ENCODE measurements at regions of chr9 and their contacts with region 1.

Region 1: DNA sequence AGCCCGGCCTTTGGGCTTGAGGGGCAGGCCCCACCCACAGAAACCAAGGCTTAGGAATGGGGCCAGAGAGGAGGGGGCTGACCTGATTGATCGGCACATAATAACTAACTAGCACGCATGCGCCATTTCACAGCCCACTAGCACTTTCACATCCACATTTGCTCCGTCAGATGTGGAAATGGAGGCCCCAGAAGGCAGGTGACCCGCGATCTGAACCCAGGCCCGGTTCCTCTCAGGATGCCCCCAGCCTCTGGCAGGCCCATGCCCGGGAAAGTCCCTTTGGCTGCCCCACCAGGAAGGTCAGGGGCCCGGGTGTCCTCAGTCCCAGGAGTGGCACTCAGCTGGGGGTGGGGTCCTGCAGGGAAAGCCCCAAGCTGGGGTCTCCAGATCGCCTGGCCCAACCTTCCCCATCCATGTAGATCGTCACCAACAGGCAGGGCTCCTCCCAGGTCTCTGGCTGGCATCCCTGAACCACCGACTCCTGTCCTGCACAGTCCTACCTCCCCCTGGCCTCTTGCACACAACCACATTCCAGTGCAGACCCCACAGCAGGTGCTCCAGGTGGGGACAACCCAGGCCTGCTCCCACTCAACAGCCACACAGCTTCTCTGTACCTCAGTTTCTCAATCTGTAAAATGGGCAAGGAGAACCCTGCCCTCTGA is 46.7 kb downstream of the VAV2 start:
- DNase-seq: no peak
- H3K4me3 Mint-ChIP-seq: no peak overlapping the region
- H3K27ac Mint-ChIP-seq: peak overlapping the region; percentile 83
- H3K4me1 Mint-ChIP-seq: peaks cover 6% of the 10 kb centered on the region
- H3K27me3 Mint-ChIP-seq: no peaks in the 10 kb centered on the region
- CTCF ChIP-seq: no peak

Region 2: GRCh38 chr9:133774799-133775198 is 170.6 kb before region 1 on chr9:
- CTCF ChIA-PET with region 1: no interaction called
- POLR2A ChIA-PET with region 1: no interaction called
- intact Hi-C with region 1: no loop called
- DNase-seq: no peak
- H3K4me3 Mint-ChIP-seq: no peak overlapping the region
- H3K27ac Mint-ChIP-seq: no peak overlapping the region
- H3K4me1 Mint-ChIP-seq: no peaks in the 10 kb centered on the region
- H3K27me3 Mint-ChIP-seq: no peaks in the 10 kb centered on the region
- CTCF ChIP-seq: no peak

Region 3: GRCh38 chr9:133874056-133874642 is 71.3 kb before region 1 on chr9:
- CTCF ChIA-PET with region 1: interaction called, 3 read pairs
- POLR2A ChIA-PET with region 1: interaction called, 12 read pairs
- intact Hi-C with region 1: loop called (anchors 2 kb)
- DNase-seq: peak; percentile 92
- H3K4me3 Mint-ChIP-seq: peak overlapping the region; percentile 45
- H3K27ac Mint-ChIP-seq: peak overlapping the region; percentile 87
- H3K4me1 Mint-ChIP-seq: peaks cover 39% of the 10 kb centered on the region
- H3K27me3 Mint-ChIP-seq: no peaks in the 10 kb centered on the region
- CTCF ChIP-seq: no peak

Region 4: DNA sequence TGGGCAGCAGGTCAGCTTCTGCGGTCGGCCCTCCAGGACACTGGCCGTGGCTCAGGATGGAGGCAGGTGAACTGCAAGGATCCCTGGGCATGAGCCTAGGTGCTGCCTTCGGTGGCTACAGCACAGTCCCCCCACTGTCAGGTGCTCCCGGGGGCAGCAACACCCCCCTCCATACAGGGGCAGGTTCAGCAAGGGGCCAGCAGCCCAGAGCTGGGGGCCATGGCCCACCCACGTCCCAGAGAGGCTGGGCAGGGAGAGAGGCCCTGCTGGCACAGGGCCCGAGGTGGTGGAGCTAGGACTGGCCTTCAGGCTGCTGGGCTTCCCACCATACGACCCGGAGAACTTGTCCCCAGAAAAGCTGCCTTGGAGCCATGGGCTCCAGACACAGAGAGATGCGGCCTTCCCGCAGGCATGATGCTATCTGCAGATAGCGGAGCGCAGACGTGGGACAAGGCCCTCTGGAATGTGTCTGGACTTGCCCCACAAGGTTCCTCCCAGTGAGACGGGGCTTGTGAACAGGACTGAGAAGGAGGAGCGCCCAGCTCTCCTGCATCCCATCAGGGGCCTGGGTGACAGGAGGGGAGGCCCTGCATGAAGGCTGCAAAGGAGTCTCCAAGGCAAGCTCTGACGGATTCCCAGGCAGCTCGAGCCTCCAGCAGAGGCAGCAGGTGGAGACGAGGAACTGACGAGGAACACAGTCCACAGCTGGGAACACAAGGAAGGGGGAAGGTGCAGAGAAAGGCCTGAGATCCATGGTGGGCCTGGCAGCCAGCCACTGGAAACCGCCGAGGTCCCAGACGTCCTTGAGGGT is 64.4 kb before region 1 on chr9:
- CTCF ChIA-PET with region 1: no interaction called
- POLR2A ChIA-PET with region 1: interaction called, 11 read pairs
- intact Hi-C with region 1: no loop called
- DNase-seq: peak; percentile 71
- H3K4me3 Mint-ChIP-seq: peak overlapping the region; percentile 56
- H3K27ac Mint-ChIP-seq: peak overlapping the region; percentile 99
- H3K4me1 Mint-ChIP-seq: peaks cover 49% of the 10 kb centered on the region
- H3K27me3 Mint-ChIP-seq: no peaks in the 10 kb centered on the region
- CTCF ChIP-seq: no peak

Region 5: DNA sequence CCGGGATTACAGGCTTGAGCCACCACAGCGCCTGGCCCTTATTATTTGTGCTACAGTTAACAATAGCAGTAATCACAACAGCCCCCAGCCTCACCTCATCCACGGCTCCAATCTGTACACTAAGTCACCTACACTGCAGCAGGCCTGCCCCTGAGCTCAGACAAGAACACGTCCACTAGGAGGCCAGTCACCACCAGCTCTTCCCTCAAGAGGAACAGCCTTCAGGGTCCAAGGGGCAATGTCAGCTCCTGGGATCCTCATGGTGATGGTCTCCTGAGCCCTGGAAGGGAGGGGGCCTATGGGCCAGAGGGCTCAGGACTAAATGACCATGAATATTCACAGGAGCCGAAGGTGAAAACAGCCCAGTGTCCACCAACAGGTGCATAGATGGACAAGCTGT is 21.0 kb before region 1 on chr9:
- CTCF ChIA-PET with region 1: no interaction called
- POLR2A ChIA-PET with region 1: no interaction called
- intact Hi-C with region 1: no loop called
- DNase-seq: no peak
- H3K4me3 Mint-ChIP-seq: no peak overlapping the region
- H3K27ac Mint-ChIP-seq: peak overlapping the region; percentile 19
- H3K4me1 Mint-ChIP-seq: peaks cover 8% of the 10 kb centered on the region
- H3K27me3 Mint-ChIP-seq: no peaks in the 10 kb centered on the region
- CTCF ChIP-seq: no peak

Region 6: DNA sequence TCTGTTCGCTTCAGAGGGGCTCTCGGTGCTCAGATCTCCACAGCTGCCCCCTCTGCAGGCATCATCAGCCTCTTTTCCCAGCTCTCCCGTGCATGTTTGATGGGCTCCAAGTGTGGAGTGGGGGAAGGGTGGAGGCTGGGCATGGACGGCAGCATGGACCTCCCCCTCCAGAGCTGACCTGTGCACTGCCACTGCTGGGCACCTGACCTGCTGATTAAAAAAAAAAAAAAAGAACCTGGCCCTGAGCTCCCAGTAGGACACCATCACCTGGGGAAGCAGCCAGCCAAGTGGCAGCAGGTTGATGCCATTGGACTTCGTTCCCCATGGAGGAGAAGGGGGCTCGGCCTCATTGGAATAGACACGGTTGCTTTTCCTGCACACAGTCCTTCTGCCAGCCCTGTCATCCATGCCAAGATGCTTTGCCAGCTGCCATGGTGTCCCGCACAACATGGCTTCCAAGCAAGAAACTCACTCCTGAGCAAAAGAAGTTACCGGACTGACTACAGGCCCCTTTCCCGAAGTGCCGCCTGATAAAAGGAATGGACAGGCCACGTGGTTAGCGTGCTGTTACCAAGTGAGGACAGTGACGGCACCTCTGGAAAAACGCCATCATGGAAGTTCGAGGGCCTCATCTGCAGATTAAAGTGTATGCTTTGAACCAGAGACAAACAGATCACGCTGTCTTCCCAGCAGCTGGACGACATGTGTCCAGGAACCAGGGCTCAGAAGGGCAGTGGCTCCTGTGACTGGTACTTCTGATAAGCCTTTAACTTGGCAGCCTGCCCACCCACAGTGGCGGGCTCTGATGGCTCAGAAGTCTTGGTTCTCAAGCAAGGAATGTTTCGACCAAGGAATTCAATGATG is 65.1 kb after region 1 on chr9:
- CTCF ChIA-PET with region 1: no interaction called
- POLR2A ChIA-PET with region 1: no interaction called
- intact Hi-C with region 1: no loop called
- DNase-seq: no peak
- H3K4me3 Mint-ChIP-seq: no peak overlapping the region
- H3K27ac Mint-ChIP-seq: no peak overlapping the region
- H3K4me1 Mint-ChIP-seq: no peaks in the 10 kb centered on the region
- H3K27me3 Mint-ChIP-seq: peaks cover 13% of the 10 kb centered on the region
- CTCF ChIP-seq: no peak